ENCODE measurements at regions of chr3 and their contacts with region 1.

Region 1: GRCh38 chr3:48609088-48610005 is at the start of gene UQCRC1:
- DNase-seq: peak; percentile 94
- H3K4me3 Mint-ChIP-seq: peak within 1 kb of the TSS; percentile 99
- H3K27ac Mint-ChIP-seq: peak within 1 kb of the TSS; percentile 92
- H3K4me1 Mint-ChIP-seq: peaks cover 23% of the 10 kb centered on the region
- H3K27me3 Mint-ChIP-seq: no peaks in the 10 kb centered on the region
- total RNA-seq, gene UQCRC1: 211 to 232 TPM

Region 2: GRCh38 chr3:48528754-48529153 is 80.6 kb before region 1 on chr3:
- CTCF ChIA-PET with region 1: no interaction called
- intact Hi-C with region 1: no loop called
- DNase-seq: no peak
- H3K4me3 Mint-ChIP-seq: no peak overlapping the region
- H3K27ac Mint-ChIP-seq: no peak overlapping the region
- H3K4me1 Mint-ChIP-seq: no peaks in the 10 kb centered on the region
- H3K27me3 Mint-ChIP-seq: no peaks in the 10 kb centered on the region

Region 3: GRCh38 chr3:48656061-48656840 is 46.9 kb after region 1 on chr3:
- CTCF ChIA-PET with region 1: no interaction called
- intact Hi-C with region 1: loop called (anchors 1 kb)
- DNase-seq: peak; percentile 89
- H3K4me3 Mint-ChIP-seq: peak overlapping the region; percentile 76
- H3K27ac Mint-ChIP-seq: peak overlapping the region; percentile 64
- H3K4me1 Mint-ChIP-seq: peaks cover 17% of the 10 kb centered on the region
- H3K27me3 Mint-ChIP-seq: peaks cover 13% of the 10 kb centered on the region

Region 4: GRCh38 chr3:48685602-48686511 is 76.5 kb after region 1 on chr3 and contains the start of gene NCKIPSD:
- CTCF ChIA-PET with region 1: interaction called, 3 read pairs
- intact Hi-C with region 1: loop called (anchors 2 kb)
- DNase-seq: peak; percentile 91
- H3K4me3 Mint-ChIP-seq: peak within 1 kb of the TSS; percentile 83
- H3K27ac Mint-ChIP-seq: peak within 1 kb of the TSS; percentile 73
- H3K4me1 Mint-ChIP-seq: peaks cover 25% of the 10 kb centered on the region
- H3K27me3 Mint-ChIP-seq: no peaks in the 10 kb centered on the region
- total RNA-seq, gene NCKIPSD: 27.3 to 28.7 TPM